ENCODE measurements at regions of chr1 and their contacts with region 1.

Region 1: GRCh38 chr1:108125312-108126138 is 74.6 kb downstream of the SLC25A24 start:
- DNase-seq: peak; percentile 35 to 77 (median 67)
- ATAC-seq: peak; percentile 97
- H3K4me3 ChIP-seq: no peak overlapping the region
- H3K4me3 Mint-ChIP-seq: no peak overlapping the region
- H3K27ac ChIP-seq: no peak overlapping the region
- H3K27ac Mint-ChIP-seq: peak overlapping the region in 4 of 9 donors; percentile 19 to 69 (median 48)
- H3K4me1 ChIP-seq: no peaks in the 10 kb centered on the region
- H3K4me1 Mint-ChIP-seq: peaks cover 4 to 10% (median 5%) of the 10 kb centered on the region in 7 donors
- H3K27me3 ChIP-seq: no peaks in the 10 kb centered on the region
- H3K27me3 Mint-ChIP-seq: no peaks in the 10 kb centered on the region

Region 2: DNA sequence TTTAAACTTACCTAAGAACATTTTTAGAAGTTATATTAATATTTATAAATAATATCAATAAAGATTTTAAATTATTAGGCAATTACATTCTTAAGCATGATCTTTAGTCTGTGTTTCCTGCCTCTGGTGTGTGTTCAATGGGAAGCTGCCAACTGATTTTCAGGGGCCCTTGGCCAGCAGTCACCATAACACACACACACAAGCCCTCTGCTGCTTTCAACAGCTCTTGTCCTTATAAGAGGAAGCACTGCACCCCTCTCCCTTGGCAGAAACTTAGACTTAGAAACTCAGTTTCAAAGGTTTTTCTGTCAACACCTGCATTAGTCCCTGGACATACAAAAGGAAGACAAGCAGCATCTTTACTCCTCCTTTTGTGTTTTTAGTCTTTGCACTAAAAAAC is 242.0 kb before region 1 on chr1:
- CTCF ChIA-PET with region 1: interaction called, 3 read pairs
- POLR2A ChIA-PET with region 1: no interaction called
- intact Hi-C with region 1: loop called in 1 of 2 experiments (anchors 5 kb)
- DNase-seq: no peak
- ATAC-seq: no peak
- H3K4me3 ChIP-seq: no peak overlapping the region
- H3K4me3 Mint-ChIP-seq: no peak overlapping the region
- H3K27ac ChIP-seq: no peak overlapping the region
- H3K27ac Mint-ChIP-seq: no peak overlapping the region
- H3K4me1 ChIP-seq: peaks cover 0 to 5% of the 10 kb centered on the region in 2 donors
- H3K4me1 Mint-ChIP-seq: peaks cover 0 to 23% (median 6%) of the 10 kb centered on the region in 7 donors
- H3K27me3 ChIP-seq: no peaks in the 10 kb centered on the region
- H3K27me3 Mint-ChIP-seq: no peaks in the 10 kb centered on the region

Region 3: DNA sequence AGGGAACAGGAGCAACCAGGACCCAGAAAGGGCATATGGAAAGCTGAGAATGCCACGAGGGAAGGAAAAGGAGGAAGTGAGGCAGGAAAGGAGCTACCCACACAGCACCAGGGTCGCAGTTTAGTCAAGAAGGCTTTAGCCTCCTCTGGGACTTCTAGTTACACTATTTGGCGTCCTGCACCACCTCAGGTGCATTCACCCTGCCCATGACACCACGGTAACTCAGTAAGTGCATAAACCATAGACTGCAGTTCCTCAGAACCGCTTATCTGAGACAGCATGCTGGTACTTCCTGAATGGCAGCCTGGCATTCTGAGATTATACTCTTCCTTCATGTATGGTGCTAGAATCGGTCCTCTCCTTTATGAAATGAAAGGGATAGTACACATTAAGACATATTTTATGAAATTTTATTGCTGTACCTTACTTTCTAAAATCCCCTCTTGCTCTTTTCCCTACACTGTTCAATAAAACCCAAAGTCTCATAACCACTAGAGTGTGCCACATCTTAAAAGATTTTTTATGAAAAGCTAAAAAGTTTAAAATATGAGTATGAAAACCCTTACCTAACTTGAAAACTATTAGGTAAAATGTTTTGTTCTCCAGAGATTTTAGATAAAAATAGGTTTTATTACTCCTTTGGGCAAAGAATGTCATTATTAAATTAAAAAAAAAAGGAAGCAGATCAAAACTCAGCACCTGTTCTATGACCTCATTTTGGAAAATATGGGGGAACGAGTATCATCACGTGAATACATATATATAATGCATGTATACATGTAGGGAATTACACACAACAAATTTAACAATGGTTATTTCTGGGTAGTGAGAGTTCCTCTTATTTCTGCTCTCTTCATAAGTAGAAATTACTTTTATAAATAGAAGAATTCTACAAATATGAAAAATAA is 227.8 kb before region 1 on chr1:
- CTCF ChIA-PET with region 1: interaction called, 3 read pairs
- POLR2A ChIA-PET with region 1: no interaction called
- intact Hi-C with region 1: loop called in 1 of 2 experiments (anchors 1 kb)
- DNase-seq: peak in 5 of 9 donors; percentile 4 to 15 (median 10)
- ATAC-seq: peak; percentile 84
- H3K4me3 ChIP-seq: no peak overlapping the region
- H3K4me3 Mint-ChIP-seq: peak overlapping the region in 9 of 10 donors; percentile 22 to 81 (median 60)
- H3K27ac ChIP-seq: no peak overlapping the region
- H3K27ac Mint-ChIP-seq: peak overlapping the region in 8 of 9 donors; percentile 2 to 87 (median 54)
- H3K4me1 ChIP-seq: peaks cover 8 to 14% of the 10 kb centered on the region in 2 donors
- H3K4me1 Mint-ChIP-seq: peaks cover 21 to 59% (median 45%) of the 10 kb centered on the region in 7 donors
- H3K27me3 ChIP-seq: no peaks in the 10 kb centered on the region
- H3K27me3 Mint-ChIP-seq: no peaks in the 10 kb centered on the region

Region 4: DNA sequence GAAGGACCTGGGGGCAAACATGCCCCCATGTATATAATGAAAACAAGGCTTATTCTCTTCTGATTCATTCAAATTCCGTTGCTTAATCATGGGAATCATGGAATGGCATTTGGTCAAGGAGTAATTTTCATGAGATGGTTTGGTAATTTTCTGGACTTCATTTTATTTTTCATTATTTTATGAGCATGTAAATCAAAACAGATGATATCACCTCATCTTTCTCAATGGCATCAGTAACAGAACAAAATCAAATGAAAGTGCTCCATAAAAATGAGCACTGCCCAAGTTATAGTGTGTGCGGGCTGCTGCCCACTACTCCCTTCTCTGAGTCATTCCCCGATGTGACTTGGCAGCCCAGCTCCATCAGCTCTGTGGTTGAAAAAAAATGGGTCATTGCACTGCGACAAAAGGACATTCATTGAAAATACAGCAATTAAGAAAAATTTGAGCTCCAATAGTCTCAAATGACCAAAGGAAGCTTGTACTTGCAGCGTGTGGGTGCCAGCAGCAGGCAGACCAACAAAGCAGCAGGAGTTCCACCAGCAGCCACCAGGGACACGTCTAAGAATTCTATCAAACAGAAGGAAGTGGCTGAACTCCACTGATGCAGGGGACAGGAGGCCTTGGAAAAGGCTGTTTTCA is 76.2 kb before region 1 on chr1:
- CTCF ChIA-PET with region 1: interaction called, 3 read pairs
- POLR2A ChIA-PET with region 1: no interaction called
- intact Hi-C with region 1: loop called (anchors 1 to 5 kb)
- DNase-seq: peak in 2 of 9 donors; percentile 30 to 35
- ATAC-seq: peak; percentile 40
- H3K4me3 ChIP-seq: no peak overlapping the region
- H3K4me3 Mint-ChIP-seq: peak overlapping the region in 5 of 10 donors; percentile 10 to 43 (median 17)
- H3K27ac ChIP-seq: no peak overlapping the region
- H3K27ac Mint-ChIP-seq: peak overlapping the region in 3 of 9 donors; percentile 18 to 68 (median 65)
- H3K4me1 ChIP-seq: peaks cover 0 to 43% of the 10 kb centered on the region in 2 donors
- H3K4me1 Mint-ChIP-seq: peaks cover 0 to 38% (median 30%) of the 10 kb centered on the region in 7 donors
- H3K27me3 ChIP-seq: no peaks in the 10 kb centered on the region
- H3K27me3 Mint-ChIP-seq: peaks cover 0 to 3% (median 0%) of the 10 kb centered on the region in 5 donors

Region 5: GRCh38 chr1:108057541-108057940 is 68.0 kb before region 1 on chr1:
- CTCF ChIA-PET with region 1: no interaction called
- POLR2A ChIA-PET with region 1: no interaction called
- intact Hi-C with region 1: loop called in 1 of 2 experiments (anchors 5 kb)
- DNase-seq: no peak
- ATAC-seq: no peak
- H3K4me3 ChIP-seq: no peak overlapping the region
- H3K4me3 Mint-ChIP-seq: no peak overlapping the region
- H3K27ac ChIP-seq: no peak overlapping the region
- H3K27ac Mint-ChIP-seq: no peak overlapping the region
- H3K4me1 ChIP-seq: no peaks in the 10 kb centered on the region
- H3K4me1 Mint-ChIP-seq: peaks cover 0 to 4% (median 0%) of the 10 kb centered on the region in 7 donors
- H3K27me3 ChIP-seq: no peaks in the 10 kb centered on the region
- H3K27me3 Mint-ChIP-seq: no peaks in the 10 kb centered on the region

Region 6: DNA sequence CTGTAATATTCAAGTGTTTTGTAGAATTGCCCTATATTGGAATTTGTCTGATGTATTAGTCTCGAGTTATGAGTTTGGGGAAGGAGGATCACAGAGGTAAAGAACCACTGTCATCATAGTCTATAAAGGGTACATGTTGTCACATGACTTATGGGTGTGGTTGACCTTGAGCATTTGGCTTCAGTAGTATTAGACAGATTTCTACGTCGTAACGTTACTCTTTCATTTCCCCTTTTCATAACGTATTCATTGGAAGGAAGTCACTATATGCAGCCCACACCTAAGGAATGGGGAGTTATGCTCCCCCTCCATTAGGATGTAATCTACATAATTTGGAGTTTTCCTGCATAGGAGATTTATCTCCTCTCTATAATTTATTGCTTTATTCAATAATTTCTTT is 50.5 kb before region 1 on chr1:
- CTCF ChIA-PET with region 1: interaction called, 3 read pairs
- POLR2A ChIA-PET with region 1: no interaction called
- intact Hi-C with region 1: loop called in 1 of 2 experiments (anchors 1 kb)
- DNase-seq: no peak
- ATAC-seq: peak; percentile 58
- H3K4me3 ChIP-seq: no peak overlapping the region
- H3K4me3 Mint-ChIP-seq: no peak overlapping the region
- H3K27ac ChIP-seq: no peak overlapping the region
- H3K27ac Mint-ChIP-seq: peak overlapping the region in 2 of 9 donors; percentile 21 to 78
- H3K4me1 ChIP-seq: peaks cover 28 to 37% of the 10 kb centered on the region in 2 donors
- H3K4me1 Mint-ChIP-seq: peaks cover 24 to 60% (median 47%) of the 10 kb centered on the region in 7 donors
- H3K27me3 ChIP-seq: no peaks in the 10 kb centered on the region
- H3K27me3 Mint-ChIP-seq: no peaks in the 10 kb centered on the region